B cell (primary cell): ENCODE measurements at regions of chr20 and their contacts with region 1.

Region 1: DNA sequence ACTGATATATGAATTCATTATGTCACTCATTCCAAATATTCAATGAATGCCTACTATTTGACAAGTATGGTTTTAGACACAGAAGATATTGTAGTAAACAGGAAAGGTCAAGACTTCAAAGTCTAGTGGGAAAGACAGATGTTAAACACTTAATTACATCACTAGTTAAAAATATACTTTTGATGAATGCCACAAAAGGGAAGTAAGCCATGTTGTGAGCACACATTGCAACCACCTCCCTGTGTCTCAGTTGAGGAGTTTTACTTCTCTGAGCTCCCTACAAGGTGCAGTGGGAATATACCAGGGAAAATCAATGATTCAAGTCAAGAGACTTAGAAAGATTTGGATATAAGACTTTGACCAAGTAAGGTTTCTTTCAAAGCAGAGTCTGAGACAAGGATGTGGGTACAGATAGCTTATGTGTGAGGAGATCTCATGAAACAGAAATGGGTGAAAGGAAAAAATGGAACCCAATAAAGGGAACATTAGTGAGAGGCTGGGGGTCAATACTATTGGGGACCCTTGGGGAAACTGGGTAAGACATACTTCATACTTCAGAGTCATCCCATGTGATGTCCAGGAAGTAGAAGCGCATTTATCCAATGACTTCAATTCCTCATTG is 503.7 kb downstream of the KIF16B start:
- DNase-seq: peak; percentile 70
- ATAC-seq: peak; percentile 82
- H3K4me3 ChIP-seq: no peak overlapping the region
- H3K4me3 Mint-ChIP-seq: peak overlapping the region; percentile 62
- H3K27ac ChIP-seq: peak overlapping the region; percentile 67 to 80
- H3K27ac Mint-ChIP-seq: peak overlapping the region; percentile 90
- H3K4me1 ChIP-seq: peaks cover 38 to 48% of the 10 kb centered on the region in 2 donors
- H3K4me1 Mint-ChIP-seq: peaks cover 59% of the 10 kb centered on the region
- H3K27me3 ChIP-seq: no peaks in the 10 kb centered on the region
- H3K27me3 Mint-ChIP-seq: no peaks in the 10 kb centered on the region
- CTCF ChIP-seq: no peak

Region 2: GRCh38 chr20:15986690-15987089 is 82.8 kb before region 1 on chr20:
- CTCF ChIA-PET with region 1: no interaction called
- POLR2A ChIA-PET with region 1: no interaction called
- intact Hi-C with region 1: loop called (anchors 1 kb)
- DNase-seq: peak; percentile 31
- ATAC-seq: peak; percentile 80
- H3K4me3 ChIP-seq: peak overlapping the region in 3 of 5 experiments; percentile 33 to 65 (median 35)
- H3K4me3 Mint-ChIP-seq: peak overlapping the region; percentile 82
- H3K27ac ChIP-seq: peak overlapping the region; percentile 63 to 73
- H3K27ac Mint-ChIP-seq: peak overlapping the region; percentile 92
- H3K4me1 ChIP-seq: peaks cover 21 to 22% of the 10 kb centered on the region in 2 donors
- H3K4me1 Mint-ChIP-seq: peaks cover 31% of the 10 kb centered on the region
- H3K27me3 ChIP-seq: no peaks in the 10 kb centered on the region
- H3K27me3 Mint-ChIP-seq: no peaks in the 10 kb centered on the region
- CTCF ChIP-seq: no peak

Region 3: DNA sequence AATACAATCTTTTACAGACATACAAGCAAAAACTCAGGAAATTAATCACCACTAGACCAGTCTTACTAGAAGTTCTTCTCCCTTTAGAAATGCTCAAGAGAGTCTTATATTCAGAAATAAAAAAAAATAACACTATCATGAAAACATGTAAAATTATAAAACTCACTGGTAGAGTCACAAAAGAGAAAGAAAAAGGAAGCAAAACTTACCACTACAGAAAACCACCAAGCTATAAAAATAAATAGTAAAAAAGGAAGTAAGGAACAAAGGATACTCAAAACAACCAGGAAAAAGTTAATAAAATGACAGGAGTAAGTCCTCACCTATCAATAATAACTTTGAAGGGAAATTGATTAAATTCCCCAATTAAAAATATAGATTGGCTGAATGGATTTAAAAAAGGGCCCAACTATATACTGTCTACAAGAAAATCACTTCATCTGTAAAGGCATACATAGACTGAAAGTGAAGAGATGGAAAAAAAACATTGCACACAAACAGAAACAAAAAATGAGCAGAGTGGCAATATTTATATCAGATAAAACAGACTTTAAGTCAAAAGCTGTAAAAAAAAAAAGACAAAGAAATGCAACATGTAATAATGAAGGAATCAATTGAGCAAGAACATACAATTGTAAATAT is 14.3 kb after region 1 on chr20:
- CTCF ChIA-PET with region 1: interaction called, 3 read pairs
- POLR2A ChIA-PET with region 1: no interaction called
- intact Hi-C with region 1: loop called (anchors 1 kb)
- DNase-seq: peak; percentile 24
- ATAC-seq: peak; percentile 17
- H3K4me3 ChIP-seq: peak overlapping the region in 2 of 5 experiments; percentile 16 to 25
- H3K4me3 Mint-ChIP-seq: peak overlapping the region; percentile 10
- H3K27ac ChIP-seq: peak overlapping the region; percentile 9 to 71
- H3K27ac Mint-ChIP-seq: peak overlapping the region; percentile 47
- H3K4me1 ChIP-seq: peaks cover 37 to 59% of the 10 kb centered on the region in 2 donors
- H3K4me1 Mint-ChIP-seq: peaks cover 48% of the 10 kb centered on the region
- H3K27me3 ChIP-seq: no peaks in the 10 kb centered on the region
- H3K27me3 Mint-ChIP-seq: no peaks in the 10 kb centered on the region
- CTCF ChIP-seq: no peak